Activated CD8-positive, alpha-beta T cell treated with anti-CD3 and anti-CD28 coated beads for 36 hours (primary cell): ENCODE measurements at regions of chr15 and their contacts with region 1.

Region 1: DNA sequence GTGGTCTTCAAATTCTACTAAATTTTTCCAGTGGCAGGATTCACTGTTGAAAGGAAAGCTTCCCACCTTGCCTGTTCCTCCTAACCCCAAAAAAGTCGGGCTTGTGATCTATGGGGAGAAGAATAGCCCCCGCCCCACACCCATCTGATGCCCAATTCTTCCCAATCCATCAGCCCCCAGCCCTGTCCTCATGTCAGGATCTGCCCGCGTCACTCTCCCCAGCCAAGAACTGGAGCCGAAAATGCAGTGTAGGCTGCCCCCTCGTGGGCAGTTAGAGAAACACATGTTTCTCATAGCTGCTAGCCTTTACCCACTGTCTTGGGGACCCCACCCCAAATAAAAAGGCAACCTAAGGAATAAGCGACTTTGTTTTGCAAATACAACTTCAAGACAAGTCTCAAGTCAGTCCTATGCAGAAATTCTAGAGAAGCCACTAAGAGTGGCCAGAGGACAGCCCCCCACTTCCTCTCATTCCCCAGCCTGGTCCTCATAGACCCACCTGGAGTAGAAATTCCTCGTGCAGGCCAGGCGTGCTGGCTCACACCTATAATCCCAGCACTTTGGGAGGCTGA is 13.0 kb upstream of the CSK start:
- DNase-seq: peak; percentile 74
- ATAC-seq: peak; percentile 59
- H3K4me3 Mint-ChIP-seq: peak overlapping the region; percentile 19
- H3K27ac Mint-ChIP-seq: peak overlapping the region; percentile 44
- H3K4me1 Mint-ChIP-seq: peaks cover 24% of the 10 kb centered on the region
- H3K27me3 Mint-ChIP-seq: peaks cover 2% of the 10 kb centered on the region
- CTCF ChIP-seq: peak; percentile 85

Region 2: GRCh38 chr15:74573987-74574386 is 194.9 kb before region 1 on chr15:
- CTCF ChIA-PET with region 1: no interaction called
- POLR2A ChIA-PET with region 1: no interaction called
- intact Hi-C with region 1: no loop called
- DNase-seq: peak; percentile 37
- ATAC-seq: peak; percentile 91
- H3K4me3 Mint-ChIP-seq: no peak overlapping the region
- H3K27ac Mint-ChIP-seq: peak overlapping the region; percentile 60
- H3K4me1 Mint-ChIP-seq: peaks cover 13% of the 10 kb centered on the region
- H3K27me3 Mint-ChIP-seq: no peaks in the 10 kb centered on the region
- CTCF ChIP-seq: no peak

Region 3: DNA sequence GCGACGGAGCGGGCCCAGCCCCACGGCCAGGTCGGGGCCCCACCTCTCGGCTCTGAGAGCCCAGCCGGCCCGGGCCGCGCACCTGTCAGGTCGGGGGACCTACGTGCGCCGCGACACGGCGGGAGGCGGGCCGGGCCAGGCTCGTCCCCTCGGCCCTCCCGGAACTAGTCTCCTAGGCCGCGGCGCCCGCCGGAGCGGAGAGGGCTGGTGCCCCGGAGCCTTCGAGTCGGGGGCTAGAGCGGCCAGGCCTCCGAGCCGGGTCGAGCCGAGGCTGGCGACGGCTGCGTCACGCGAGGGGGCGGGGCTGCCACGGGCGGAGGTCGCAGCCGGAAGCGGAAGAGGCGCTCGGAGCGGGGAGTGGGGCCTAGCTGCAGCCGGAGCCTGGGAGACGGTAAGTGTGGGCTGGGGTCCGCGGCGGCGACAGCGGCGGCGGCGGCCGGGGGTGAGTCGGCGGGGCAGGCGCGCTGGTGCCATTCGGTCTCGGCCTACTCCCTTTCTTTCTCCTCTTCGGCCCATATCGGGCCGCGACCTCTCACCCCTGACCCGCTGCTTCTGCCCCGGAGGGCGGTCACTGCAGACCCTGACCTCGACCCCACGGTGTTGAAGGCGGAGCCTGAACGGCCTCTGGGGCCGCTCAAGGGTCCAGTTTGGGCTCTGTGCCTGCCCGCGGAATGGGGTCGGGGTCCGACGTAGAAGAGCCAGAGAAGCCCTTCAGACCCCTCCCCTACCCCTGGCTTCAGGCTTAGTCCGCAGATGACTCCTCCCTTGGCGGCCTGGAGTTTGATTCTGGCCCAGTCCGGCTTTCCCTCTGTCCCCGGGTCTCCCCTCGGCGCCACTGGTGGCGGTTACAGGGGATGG is 153.1 kb before region 1 on chr15 and contains the start of gene CLK3:
- CTCF ChIA-PET with region 1: interaction called, 29 read pairs
- POLR2A ChIA-PET with region 1: interaction called, 6 read pairs
- intact Hi-C with region 1: no loop called
- DNase-seq: peak; percentile 97
- ATAC-seq: peak; percentile 88
- H3K4me3 Mint-ChIP-seq: peak within 1 kb of the TSS; percentile 92
- H3K27ac Mint-ChIP-seq: peak within 1 kb of the TSS; percentile 98
- H3K4me1 Mint-ChIP-seq: peaks cover 43% of the 10 kb centered on the region
- H3K27me3 Mint-ChIP-seq: no peaks in the 10 kb centered on the region
- CTCF ChIP-seq: no peak
- total RNA-seq, gene CLK3: 159 to 168 TPM

Region 4: GRCh38 chr15:74648166-74648842 is 120.6 kb before region 1 on chr15:
- CTCF ChIA-PET with region 1: interaction called, 576 read pairs
- POLR2A ChIA-PET with region 1: no interaction called
- intact Hi-C with region 1: no loop called
- DNase-seq: no peak
- ATAC-seq: no peak
- H3K4me3 Mint-ChIP-seq: no peak overlapping the region
- H3K27ac Mint-ChIP-seq: no peak overlapping the region
- H3K4me1 Mint-ChIP-seq: no peaks in the 10 kb centered on the region
- H3K27me3 Mint-ChIP-seq: no peaks in the 10 kb centered on the region
- CTCF ChIP-seq: no peak

Region 5: GRCh38 chr15:74754593-74755215 is 14.2 kb before region 1 on chr15:
- CTCF ChIA-PET with region 1: interaction called, 60 read pairs
- POLR2A ChIA-PET with region 1: interaction called, 6 read pairs
- intact Hi-C with region 1: no loop called
- DNase-seq: no peak
- ATAC-seq: no peak
- H3K4me3 Mint-ChIP-seq: no peak overlapping the region
- H3K27ac Mint-ChIP-seq: no peak overlapping the region
- H3K4me1 Mint-ChIP-seq: no peaks in the 10 kb centered on the region
- H3K27me3 Mint-ChIP-seq: no peaks in the 10 kb centered on the region
- CTCF ChIP-seq: no peak

Region 6: DNA sequence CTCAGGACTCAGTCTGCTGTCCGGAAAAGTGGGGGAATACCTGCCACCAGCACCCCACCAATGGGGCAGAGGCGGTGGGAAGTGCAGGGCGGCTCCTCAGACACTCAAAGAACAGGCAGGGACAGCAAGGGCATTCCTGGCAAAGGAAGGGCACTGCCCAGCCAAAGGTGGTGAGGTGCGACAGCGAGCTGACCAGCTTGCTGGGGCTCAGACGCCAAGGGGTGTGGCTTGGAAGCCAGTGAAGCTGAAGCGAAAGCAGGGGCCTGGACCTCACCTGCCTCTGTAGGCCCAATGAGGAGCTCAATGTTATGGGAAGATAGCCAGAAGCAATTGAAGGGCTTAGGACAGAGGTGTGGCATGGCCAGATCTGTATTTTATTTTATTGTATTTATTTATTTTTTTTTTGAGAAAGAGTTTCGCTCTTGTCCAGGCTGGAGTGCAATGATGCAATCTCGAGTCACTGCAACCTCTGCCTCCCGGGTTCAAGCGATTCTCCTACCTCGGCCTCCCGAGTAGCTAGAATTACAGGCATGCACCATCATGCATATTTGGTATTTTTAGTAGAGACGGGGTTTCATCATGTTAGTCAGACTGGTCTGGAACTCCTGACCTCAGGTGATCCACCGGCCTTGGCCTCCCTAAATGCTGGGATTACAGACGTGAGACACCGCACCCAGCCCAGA is 39.4 kb after region 1 on chr15:
- CTCF ChIA-PET with region 1: interaction called, 83 read pairs
- POLR2A ChIA-PET with region 1: interaction called, 9 read pairs
- intact Hi-C with region 1: no loop called
- DNase-seq: no peak
- ATAC-seq: no peak
- H3K4me3 Mint-ChIP-seq: no peak overlapping the region
- H3K27ac Mint-ChIP-seq: no peak overlapping the region
- H3K4me1 Mint-ChIP-seq: peaks cover 17% of the 10 kb centered on the region
- H3K27me3 Mint-ChIP-seq: no peaks in the 10 kb centered on the region
- CTCF ChIP-seq: no peak

Region 7: DNA sequence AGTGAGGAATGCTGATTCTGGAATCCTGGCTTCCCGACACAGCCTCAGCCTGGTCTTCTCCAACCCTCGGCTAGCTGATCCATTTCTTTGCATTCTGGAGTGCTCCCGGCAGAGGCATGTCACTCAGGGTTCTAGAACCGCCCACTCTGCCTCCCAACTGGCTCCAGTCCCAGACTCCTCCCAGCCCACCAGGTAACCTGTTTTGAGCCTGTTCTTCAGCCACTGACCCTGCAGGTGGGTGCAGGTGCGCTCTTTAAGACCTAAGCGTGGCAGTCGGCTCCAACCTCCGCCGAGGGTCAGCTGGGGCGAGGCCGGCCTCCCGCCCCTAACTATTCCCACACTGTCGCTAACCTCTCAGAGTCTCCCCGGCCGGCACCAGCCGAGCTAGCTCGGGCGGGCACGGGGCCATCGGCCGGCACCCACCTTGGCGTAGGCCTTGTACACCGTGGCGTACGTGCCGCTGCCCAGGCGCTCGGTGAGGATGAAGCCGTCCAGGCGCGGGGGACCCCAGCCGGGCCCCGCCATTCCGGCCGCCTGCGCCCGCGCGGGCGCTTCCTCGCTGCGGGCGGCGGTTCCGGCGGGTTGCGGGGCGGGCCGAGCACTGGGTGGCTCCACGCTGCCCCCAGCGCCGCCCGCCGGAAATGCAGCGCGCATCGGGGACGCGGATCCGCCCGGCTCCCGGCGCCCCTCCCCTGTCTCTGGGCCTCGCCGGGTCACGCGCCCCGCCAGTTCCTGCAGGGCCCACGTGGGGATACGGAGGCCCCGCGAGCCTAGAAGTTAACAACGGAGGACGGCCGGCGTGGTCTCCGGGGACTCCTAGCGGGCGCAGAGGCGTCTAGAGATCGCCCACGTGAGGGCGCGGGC is 74.0 kb after region 1 on chr15 and contains the start of gene ULK3:
- CTCF ChIA-PET with region 1: interaction called, 38 read pairs
- POLR2A ChIA-PET with region 1: interaction called, 3 read pairs
- intact Hi-C with region 1: no loop called
- DNase-seq: peak; percentile 94
- ATAC-seq: peak; percentile 92
- H3K4me3 Mint-ChIP-seq: peak within 1 kb of the TSS; percentile 90
- H3K27ac Mint-ChIP-seq: peak within 1 kb of the TSS; percentile 94
- H3K4me1 Mint-ChIP-seq: peaks cover 44% of the 10 kb centered on the region
- H3K27me3 Mint-ChIP-seq: no peaks in the 10 kb centered on the region
- CTCF ChIP-seq: peak; percentile 89
- total RNA-seq, gene ULK3: 45.9 to 49.3 TPM

Region 8: DNA sequence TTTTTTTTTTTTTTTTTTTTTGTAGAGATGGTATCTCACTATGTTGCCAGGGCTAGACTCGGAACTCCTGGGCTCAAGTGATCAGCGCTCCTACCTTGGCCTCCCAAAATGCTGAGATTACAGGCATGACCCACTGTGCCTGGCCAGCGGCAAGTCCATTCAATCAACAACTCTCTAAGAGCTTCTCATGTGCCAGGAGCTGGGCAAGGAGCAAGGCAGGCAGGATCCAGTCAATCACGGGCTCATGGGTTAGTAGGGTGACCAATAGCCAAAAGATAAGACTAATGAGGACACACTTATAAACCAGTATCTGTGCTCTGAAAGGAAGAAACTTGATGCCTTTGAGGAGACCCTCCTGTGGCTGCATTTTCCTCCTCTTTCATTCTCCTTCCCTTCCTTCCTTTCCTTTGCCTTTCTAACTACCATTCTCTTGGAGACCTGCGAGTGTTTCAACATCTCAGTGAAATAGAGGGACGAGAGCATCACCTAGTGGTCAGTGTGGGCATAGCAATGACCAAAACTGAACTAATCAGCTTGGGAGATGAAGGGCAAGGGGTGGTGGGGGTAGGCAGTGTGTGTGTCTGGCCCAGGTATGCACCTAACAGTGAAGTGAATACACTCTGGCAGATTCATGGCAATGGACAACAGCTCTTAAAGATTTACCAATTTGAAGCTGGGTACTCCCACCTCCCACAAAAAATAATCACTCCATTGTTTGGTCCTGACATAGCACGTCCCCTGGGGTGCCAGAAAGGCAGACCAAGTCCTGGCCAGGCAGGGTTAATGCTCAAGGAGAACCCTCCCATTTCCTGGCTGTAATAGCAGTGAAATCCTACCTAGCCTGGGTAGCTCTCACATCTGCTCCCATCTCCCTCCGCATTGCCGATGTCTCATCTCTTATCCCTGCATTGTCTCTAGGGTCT is 181.5 kb after region 1 on chr15:
- CTCF ChIA-PET with region 1: interaction called, 25 read pairs
- POLR2A ChIA-PET with region 1: no interaction called
- intact Hi-C with region 1: no loop called
- DNase-seq: peak; percentile 89
- ATAC-seq: peak; percentile 92
- H3K4me3 Mint-ChIP-seq: no peak overlapping the region
- H3K27ac Mint-ChIP-seq: no peak overlapping the region
- H3K4me1 Mint-ChIP-seq: peaks cover 12% of the 10 kb centered on the region
- H3K27me3 Mint-ChIP-seq: no peaks in the 10 kb centered on the region
- CTCF ChIP-seq: peak; percentile 96